Left ventricle myocardium inferior (tissue), 1 donor: ENCODE measurements at regions of chr6 and their contacts with region 1.

Region 1: GRCh38 chr6:116010790-116011401 is 49.8 kb downstream of the FRK start:
- DNase-seq: peak; percentile 57
- H3K4me3 ChIP-seq: no peak overlapping the region
- H3K27ac ChIP-seq: peak overlapping the region; percentile 86
- H3K4me1 ChIP-seq: peaks cover 82% of the 10 kb centered on the region
- H3K27me3 ChIP-seq: no peaks in the 10 kb centered on the region
- CTCF ChIP-seq: peak; percentile 83

Region 2: DNA sequence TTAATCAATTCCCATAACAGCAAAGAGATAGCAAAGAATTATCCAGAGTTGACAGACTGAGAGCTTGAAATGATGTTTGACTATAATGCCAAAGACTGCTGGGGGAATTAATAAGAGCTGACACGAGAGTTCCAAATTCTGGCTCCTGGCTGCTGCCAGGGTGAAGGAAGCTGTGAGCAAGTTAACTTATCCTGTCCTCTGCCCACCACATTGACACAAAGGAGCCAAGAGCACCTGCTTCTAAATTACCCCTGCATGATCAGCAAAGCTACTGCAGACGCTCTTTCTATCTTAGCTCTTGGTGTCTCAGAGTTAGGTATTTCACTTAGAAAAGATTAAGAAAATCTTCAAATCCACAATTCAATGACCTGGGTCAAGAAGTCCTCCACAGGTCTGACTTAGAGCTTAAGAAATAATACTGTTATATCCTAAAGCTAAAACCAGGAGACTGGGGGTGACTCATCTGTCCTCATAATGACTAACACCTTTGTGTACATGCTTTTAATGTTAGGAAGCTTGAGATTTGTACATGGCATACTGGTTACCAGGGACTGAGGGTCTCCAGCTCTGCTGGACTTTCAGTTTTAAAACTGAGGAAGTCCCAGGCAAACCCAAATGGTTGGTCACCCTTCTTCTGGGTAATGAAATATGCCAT is 63.0 kb after region 1 on chr6:
- intact Hi-C with region 1: no loop called
- DNase-seq: no peak
- H3K4me3 ChIP-seq: no peak overlapping the region
- H3K27ac ChIP-seq: no peak overlapping the region
- H3K4me1 ChIP-seq: peaks cover 9% of the 10 kb centered on the region
- H3K27me3 ChIP-seq: no peaks in the 10 kb centered on the region
- CTCF ChIP-seq: no peak

Region 3: GRCh38 chr6:116096979-116097816 is 86.3 kb after region 1 on chr6:
- intact Hi-C with region 1: loop called (anchors 2 kb)
- DNase-seq: no peak
- H3K4me3 ChIP-seq: no peak overlapping the region
- H3K27ac ChIP-seq: no peak overlapping the region
- H3K4me1 ChIP-seq: peaks cover 27% of the 10 kb centered on the region
- H3K27me3 ChIP-seq: no peaks in the 10 kb centered on the region
- CTCF ChIP-seq: peak; percentile 64

Region 4: GRCh38 chr6:116221067-116221466 is 210.2 kb after region 1 on chr6:
- intact Hi-C with region 1: no loop called
- DNase-seq: no peak
- H3K4me3 ChIP-seq: no peak overlapping the region
- H3K27ac ChIP-seq: no peak overlapping the region
- H3K4me1 ChIP-seq: peaks cover 14% of the 10 kb centered on the region
- H3K27me3 ChIP-seq: no peaks in the 10 kb centered on the region
- CTCF ChIP-seq: no peak